ENCODE measurements at regions of chr19 and their contacts with region 1.

Region 1: DNA sequence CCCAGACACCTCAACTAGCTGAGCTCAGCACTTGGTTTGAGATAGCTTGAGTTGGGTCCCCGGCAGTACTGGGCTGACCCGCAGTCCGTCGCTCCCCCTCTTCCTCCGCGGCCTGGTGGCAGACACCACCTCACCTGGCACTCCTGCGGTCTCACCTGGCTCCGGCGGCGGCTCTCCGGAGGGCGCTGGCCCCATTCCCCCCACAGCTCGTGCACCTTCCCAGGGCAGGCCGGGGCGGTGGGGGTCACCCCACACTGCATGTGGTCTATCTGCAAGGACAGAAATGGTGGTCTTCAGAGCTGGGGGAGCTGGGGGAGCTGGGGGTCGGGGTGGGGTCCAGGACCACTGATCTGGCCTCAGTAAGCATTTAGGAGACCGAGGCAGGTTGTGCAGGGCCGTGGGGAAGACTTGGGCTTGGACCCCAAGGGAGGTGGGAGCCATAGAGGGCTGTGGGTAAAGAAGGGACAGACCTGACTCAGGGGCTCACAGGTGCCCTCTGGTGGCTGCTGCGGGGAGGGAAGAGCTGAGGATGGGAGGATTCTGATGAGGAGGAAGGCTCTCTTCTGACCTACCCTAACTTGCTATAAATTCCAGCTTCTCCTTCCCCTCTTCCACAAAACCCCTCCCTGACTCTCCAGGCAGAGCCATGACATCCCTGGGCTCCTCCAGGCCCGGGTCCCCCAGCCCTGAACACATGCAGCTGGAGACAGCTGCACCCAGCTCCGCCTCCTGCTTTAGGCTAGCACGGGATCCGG is 6.7 kb upstream of the PLIN4 start:
- DNase-seq: peak in 1 of 2 experiments; percentile 95
- H3K4me3 ChIP-seq: no peak overlapping the region
- H3K27ac ChIP-seq: no peak overlapping the region
- H3K4me1 ChIP-seq: no peaks in the 10 kb centered on the region; a peak in 2 of 7 replicates
- H3K27me3 ChIP-seq: peaks cover 0 to 10% (median 5%) of the 10 kb centered on the region in 4 experiments; a peak in 3 of 7 replicates
- CTCF ChIP-seq: peak; percentile 74 to 98 (median 95)
- EP300 ChIP-seq: no peak
- POLR2A ChIP-seq: no peak
- RAD21 ChIP-seq: peak; percentile 34 to 45

Region 2: DNA sequence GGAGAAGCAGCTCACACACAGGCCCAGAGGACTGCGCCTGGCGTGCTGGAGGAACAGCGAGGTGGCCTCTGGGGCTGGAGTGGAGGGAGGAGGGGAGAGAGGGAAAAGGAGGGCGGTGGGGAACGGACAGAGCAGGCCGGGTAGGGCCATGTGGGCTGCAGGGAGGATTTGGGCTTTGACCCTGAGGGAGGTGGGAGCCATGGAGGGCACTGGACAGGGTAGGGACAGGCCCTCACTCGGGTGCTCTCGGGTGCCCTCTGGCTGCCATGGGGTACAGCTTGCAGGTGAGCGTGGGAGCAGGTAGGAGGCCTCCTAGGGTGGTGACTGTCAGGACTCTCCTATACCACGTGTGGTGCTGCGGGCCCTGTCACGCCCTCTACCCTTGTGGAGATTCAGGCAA is 29.5 kb before region 1 on chr19:
- CTCF ChIA-PET with region 1: interaction called, 17 read pairs
- POLR2A ChIA-PET with region 1: interaction called, 3 read pairs
- DNase-seq: peak in 1 of 2 experiments; percentile 56
- H3K4me3 ChIP-seq: no peak overlapping the region
- H3K27ac ChIP-seq: no peak overlapping the region
- H3K4me1 ChIP-seq: no peaks in the 10 kb centered on the region
- H3K27me3 ChIP-seq: no peaks in the 10 kb centered on the region; a peak in 1 of 7 replicates
- CTCF ChIP-seq: peak; percentile 38 to 51 (median 46)
- EP300 ChIP-seq: no peak
- POLR2A ChIP-seq: no peak
- RAD21 ChIP-seq: peak; percentile 5 to 20; a peak in 1 of 4 replicates

Region 3: GRCh38 chr19:4534836-4535658 is 10.1 kb after region 1 on chr19 and contains the start of gene PLIN5:
- CTCF ChIA-PET with region 1: interaction called, 174 read pairs
- POLR2A ChIA-PET with region 1: interaction called, 23 read pairs
- DNase-seq: peak; percentile 54 to 99
- H3K4me3 ChIP-seq: peak within 1 kb of the TSS in 3 of 4 experiments; percentile 12 to 53 (median 16); a peak in 5 of 8 replicates
- H3K27ac ChIP-seq: no peak within 1 kb of the TSS
- H3K4me1 ChIP-seq: peaks cover 0 to 13% (median 5%) of the 10 kb centered on the region in 4 experiments; a peak in 5 of 7 replicates
- H3K27me3 ChIP-seq: peaks cover 0 to 19% (median 15%) of the 10 kb centered on the region in 4 experiments; a peak in 4 of 7 replicates
- CTCF ChIP-seq: peak in 2 of 3 experiments; percentile 0 to 8; a peak in 2 of 4 replicates
- EP300 ChIP-seq: no peak
- POLR2A ChIP-seq: peak in 1 of 2 experiments; percentile 86; a peak in 2 of 3 replicates
- RAD21 ChIP-seq: peak in 1 of 2 experiments; percentile 3; a peak in 1 of 4 replicates
- total RNA-seq, gene PLIN5: 1.8 and 2.0 TPM in 2 replicates

Region 4: DNA sequence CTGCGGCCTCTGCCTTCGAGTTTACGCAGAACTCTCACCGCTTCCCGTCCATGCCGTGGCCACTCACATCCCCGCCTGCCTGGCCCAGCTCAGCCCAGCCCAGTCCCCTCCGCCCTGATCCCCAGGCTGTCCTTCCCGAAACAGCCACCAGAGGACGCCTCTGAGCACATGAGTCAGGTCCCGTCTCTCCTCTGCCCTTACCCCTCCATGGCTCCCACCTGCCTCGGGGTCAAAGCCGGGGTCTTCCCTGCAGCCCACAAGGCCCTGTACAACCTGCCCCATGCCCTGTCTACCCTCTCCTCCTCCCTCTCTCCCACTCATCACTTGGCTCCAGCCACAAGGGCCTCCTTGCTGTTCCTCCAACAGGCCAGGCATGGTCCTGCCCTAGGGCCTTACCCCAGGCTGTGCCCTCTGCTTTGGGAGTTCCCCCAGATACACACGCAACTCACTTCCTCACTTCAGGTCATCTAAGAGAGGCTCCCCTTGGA is 42.6 kb after region 1 on chr19:
- CTCF ChIA-PET with region 1: interaction called, 10 read pairs
- POLR2A ChIA-PET with region 1: no interaction called
- DNase-seq: peak; percentile 66 to 99
- H3K4me3 ChIP-seq: no peak overlapping the region
- H3K27ac ChIP-seq: no peak overlapping the region
- H3K4me1 ChIP-seq: peaks cover 0 to 2% (median 0%) of the 10 kb centered on the region in 4 experiments; a peak in 1 of 7 replicates
- H3K27me3 ChIP-seq: no peaks in the 10 kb centered on the region
- CTCF ChIP-seq: peak; percentile 91 to 100 (median 99)
- EP300 ChIP-seq: no peak
- POLR2A ChIP-seq: no peak
- RAD21 ChIP-seq: peak; percentile 59 to 69

Region 5: DNA sequence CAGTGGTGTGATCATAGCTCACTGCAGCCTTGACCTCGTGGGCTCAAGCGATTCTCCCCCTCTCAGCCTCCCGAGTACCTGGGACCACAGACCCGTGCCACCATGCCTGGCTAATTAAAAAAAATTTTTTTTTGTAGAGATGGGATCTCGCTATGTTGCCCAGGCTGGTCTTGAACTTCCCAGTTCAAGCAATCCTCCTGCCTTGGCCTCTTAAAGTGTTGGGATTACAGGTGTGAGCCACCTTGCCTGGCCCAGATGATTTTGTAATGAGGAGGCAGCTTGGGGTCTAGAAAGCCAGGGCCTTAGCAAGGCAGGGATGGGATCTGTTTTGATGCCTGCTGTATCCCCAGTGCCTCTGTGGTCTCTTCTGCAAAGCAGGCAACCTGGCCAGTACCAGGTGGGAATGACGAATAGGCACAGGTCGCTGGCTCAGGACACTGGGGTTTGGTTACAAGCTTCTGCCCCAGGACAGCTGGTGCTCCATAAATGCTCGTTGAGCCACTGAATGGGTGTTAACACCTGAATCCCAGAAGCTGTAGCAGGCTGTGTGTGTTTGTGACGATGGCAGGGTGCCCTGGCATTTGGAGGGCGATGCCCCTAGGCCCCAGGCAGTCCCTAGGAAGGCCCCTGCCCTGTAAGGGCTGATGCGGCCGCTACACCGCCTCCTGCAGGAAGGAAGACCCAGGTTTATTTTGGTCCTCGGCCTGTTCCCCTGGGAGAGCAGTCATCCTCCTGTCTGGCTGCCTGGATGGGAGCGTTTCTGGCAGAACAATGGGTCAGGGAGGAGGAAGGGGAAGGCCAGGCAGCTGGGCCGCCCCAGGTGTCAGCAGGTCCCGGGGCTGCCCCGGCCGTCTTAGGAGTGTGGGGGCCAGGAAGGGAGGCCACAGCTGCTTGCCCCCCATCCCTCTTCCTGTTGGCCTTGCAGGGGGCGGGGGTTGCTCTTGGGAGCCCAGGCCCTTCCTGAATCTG is 123.0 kb after region 1 on chr19:
- CTCF ChIA-PET with region 1: interaction called, 11 read pairs
- POLR2A ChIA-PET with region 1: no interaction called
- DNase-seq: peak in 1 of 2 experiments; percentile 69
- H3K4me3 ChIP-seq: no peak overlapping the region
- H3K27ac ChIP-seq: no peak overlapping the region
- H3K4me1 ChIP-seq: no peaks in the 10 kb centered on the region; a peak in 1 of 7 replicates
- H3K27me3 ChIP-seq: no peaks in the 10 kb centered on the region
- CTCF ChIP-seq: peak; percentile 50 to 63 (median 59)
- EP300 ChIP-seq: no peak
- POLR2A ChIP-seq: no peak
- RAD21 ChIP-seq: peak in 1 of 2 experiments; percentile 33; a peak in 2 of 4 replicates